ENCODE measurements at regions of chr10 and their contacts with region 1.

Region 1: DNA sequence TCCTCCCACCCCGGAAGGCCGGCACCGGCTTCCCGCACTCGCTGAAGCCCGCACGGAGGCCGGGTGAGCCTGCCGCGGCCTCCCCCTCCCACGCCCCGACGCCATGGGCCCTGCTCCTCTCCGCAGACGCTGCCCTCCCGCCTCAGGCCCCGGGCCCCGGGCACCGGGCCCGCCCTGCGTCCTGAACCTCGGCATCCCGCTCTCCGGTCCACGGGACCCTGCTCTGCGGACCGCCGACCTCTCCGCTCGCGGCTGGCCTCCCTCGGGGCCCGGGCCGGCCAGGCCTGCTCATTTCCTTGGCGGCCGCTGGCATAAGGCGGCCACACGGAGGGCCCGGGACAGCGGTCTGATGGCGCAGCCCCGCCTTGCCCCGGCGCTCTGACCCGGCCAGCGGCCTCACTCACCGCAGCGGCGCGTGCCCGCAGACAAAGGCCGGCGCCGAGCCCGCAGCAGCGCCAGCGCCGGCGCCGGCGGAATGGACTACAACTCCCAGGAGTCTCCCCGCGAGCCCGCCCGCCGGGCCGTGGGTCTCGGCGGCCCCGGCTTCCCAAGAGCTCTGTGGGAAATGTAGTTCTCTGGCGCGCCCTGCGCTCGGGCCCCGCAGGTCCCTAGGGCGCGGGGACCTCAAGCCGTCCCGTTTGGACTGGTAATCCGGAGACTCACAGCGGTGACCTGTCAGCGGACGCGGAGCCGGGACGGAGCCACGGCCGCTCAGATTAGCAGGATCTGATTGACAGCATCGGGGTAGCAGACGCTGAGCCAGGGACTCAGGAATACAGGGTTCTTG is at the start of gene ZNF32:
- DNase-seq: peak; percentile 80
- H3K4me3 ChIP-seq: peak within 1 kb of the TSS; percentile 50 to 77 (median 62)
- H3K27ac ChIP-seq: peak within 1 kb of the TSS; percentile 42
- H3K4me1 ChIP-seq: peaks cover 5% of the 10 kb centered on the region
- H3K27me3 ChIP-seq: peaks cover 0 to 6% of the 10 kb centered on the region in 2 experiments
- CTCF ChIP-seq: no peak
- POLR2A ChIP-seq: peak; percentile 37
- total RNA-seq, gene ZNF32: 14.4 and 14.5 TPM in 2 replicates

Region 2: DNA sequence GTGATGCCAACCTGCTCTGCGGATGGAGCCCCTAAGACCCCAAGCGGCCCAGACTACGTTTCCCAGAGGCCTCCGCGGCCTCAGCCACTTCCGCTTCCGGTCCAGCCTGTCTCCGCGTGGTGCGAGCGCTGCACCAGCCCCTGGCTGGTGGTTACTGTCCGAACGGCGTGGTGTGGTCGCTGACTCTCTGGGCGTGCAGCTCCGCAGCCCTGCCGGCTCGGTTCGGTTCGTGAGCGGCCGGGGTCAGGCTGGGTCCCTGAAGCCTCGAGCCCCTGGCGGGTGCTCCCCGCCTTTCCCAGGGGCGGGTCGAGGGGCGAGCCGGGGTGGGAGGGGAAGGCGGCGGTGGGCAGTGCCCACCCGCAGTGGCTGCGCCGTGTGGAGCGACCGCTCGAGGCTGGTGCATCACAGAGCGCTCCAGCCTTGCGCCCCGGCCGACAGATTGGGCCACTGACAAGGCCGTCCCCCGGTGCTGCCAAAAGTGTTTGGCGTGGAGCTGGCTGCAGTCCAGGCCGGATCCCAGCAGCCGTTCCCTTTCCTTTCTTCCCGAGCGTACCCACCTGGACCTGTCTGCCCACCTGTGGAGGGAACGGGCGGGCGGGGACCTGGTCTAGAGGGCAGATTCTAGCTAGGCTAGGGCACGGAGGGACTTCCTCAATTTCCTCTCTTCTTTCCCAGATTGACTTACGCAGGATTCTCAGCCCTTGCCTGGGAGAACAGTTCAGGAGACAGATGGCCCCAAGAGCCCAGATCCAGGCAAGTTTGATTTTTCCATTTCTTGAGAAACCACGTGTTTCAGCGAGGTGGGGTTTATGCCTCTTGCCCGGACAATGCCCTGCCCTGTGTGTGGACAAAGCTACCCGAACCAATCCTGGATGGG is 42.0 kb before region 1 on chr10 and contains the start of gene ZNF485:
- CTCF ChIA-PET with region 1: no interaction called
- POLR2A ChIA-PET with region 1: no interaction called
- dilution Hi-C with region 1: no loop called
- intact Hi-C with region 1: loop called (anchors 1 kb)
- DNase-seq: peak; percentile 60
- H3K4me3 ChIP-seq: peak within 1 kb of the TSS; percentile 12 to 54 (median 19)
- H3K27ac ChIP-seq: no peak within 1 kb of the TSS
- H3K4me1 ChIP-seq: no peaks in the 10 kb centered on the region
- H3K27me3 ChIP-seq: no peaks in the 10 kb centered on the region
- CTCF ChIP-seq: no peak
- POLR2A ChIP-seq: peak; percentile 60
- total RNA-seq, gene ZNF485: 1.2 and 1.7 TPM in 2 replicates

Region 3: GRCh38 chr10:43627942-43628341 is 20.6 kb before region 1 on chr10:
- CTCF ChIA-PET with region 1: no interaction called
- POLR2A ChIA-PET with region 1: no interaction called
- dilution Hi-C with region 1: no loop called
- intact Hi-C with region 1: no loop called
- DNase-seq: no peak
- H3K4me3 ChIP-seq: no peak overlapping the region
- H3K27ac ChIP-seq: no peak overlapping the region
- H3K4me1 ChIP-seq: no peaks in the 10 kb centered on the region
- H3K27me3 ChIP-seq: no peaks in the 10 kb centered on the region
- CTCF ChIP-seq: no peak
- POLR2A ChIP-seq: no peak

Region 4: DNA sequence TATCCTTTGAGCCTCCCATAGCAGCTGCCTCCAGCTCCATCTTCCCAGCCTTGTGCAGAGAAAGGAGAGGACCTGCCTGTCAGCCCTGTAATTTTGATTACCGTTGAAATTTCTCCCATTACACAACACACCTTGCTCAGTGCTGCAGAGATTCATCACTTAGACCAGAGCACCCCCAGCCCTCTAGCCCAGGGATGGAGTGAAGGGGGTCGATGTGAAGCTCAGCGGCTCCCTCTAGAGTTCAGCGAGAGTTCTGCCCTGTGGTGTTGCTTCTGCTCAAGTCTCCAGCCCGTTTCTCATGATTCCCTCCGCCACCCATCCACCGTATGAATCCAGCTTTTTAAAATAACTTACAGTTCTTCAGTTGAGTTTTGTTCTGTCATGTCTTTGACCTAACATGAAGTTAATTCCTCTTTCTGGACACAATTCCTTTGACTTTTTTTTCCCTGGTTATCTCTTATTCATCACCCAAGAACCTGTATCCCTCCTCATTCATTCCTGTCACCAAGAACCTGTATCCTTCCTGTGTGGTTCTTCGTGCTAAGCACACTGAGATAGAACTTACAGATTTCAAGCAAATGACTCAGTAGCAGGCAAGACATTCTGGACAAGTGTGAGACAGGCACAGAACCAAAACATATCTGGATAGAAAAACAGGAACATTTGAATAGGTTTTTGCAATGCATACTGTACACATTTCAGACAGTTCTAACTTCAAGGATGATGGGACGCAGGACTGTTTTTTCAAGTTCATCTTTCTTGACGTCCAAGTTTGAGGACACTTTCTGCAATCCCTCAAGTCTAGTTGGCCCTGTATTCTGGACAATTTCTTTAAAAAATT is 35.1 kb after region 1 on chr10:
- CTCF ChIA-PET with region 1: no interaction called
- POLR2A ChIA-PET with region 1: no interaction called
- dilution Hi-C with region 1: no loop called
- intact Hi-C with region 1: no loop called
- DNase-seq: no peak
- H3K4me3 ChIP-seq: no peak overlapping the region
- H3K27ac ChIP-seq: no peak overlapping the region
- H3K4me1 ChIP-seq: no peaks in the 10 kb centered on the region
- H3K27me3 ChIP-seq: peaks cover 0 to 6% of the 10 kb centered on the region in 2 experiments
- CTCF ChIP-seq: peak; percentile 46 to 65
- POLR2A ChIP-seq: no peak

Region 5: DNA sequence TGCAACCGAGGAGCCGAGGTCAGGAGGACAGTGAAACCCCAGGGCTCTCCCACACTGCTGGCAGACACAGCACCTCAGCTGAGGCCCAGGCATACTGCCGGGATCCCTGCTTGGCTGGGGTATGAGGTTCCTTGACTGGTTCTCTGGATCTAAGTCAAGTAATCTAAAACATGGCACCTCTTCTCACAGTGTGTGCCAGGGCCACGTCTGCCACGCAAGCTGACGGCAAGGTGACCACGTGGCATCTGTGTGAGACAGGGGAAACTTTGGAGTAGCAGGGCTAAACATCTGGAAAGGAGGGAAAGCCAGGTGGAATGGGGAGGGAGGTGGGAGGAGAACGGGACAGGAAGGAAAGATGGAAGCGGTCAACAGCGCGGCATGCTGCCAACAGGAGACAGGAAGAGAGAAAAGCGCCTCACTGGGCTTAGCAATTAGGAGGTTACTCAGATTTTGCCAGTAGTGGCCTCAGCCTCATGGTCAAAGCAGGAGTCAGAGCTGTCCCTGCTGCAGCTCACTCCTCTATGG is 632.6 kb after region 1 on chr10:
- CTCF ChIA-PET with region 1: no interaction called
- POLR2A ChIA-PET with region 1: no interaction called
- dilution Hi-C with region 1: no loop called
- intact Hi-C with region 1: no loop called
- DNase-seq: no peak
- H3K4me3 ChIP-seq: no peak overlapping the region
- H3K27ac ChIP-seq: no peak overlapping the region
- H3K4me1 ChIP-seq: no peaks in the 10 kb centered on the region
- H3K27me3 ChIP-seq: no peaks in the 10 kb centered on the region
- CTCF ChIP-seq: no peak
- POLR2A ChIP-seq: no peak